ENCODE measurements at regions of chr20 and their contacts with region 1.

Region 1: GRCh38 chr20:36469973-36470372 is 71.3 kb upstream of the MYL9 start:
- DNase-seq: no peak
- ATAC-seq: no peak
- H3K4me3 ChIP-seq: no peak overlapping the region
- H3K27ac ChIP-seq: peak overlapping the region; percentile 43 to 53; a peak in 4 of 6 replicates
- H3K4me1 ChIP-seq: peaks cover 99% of the 10 kb centered on the region
- CTCF ChIP-seq: no peak
- EP300 ChIP-seq: no peak
- POLR2A ChIP-seq: no peak
- RAD21 ChIP-seq: no peak

Region 2: DNA sequence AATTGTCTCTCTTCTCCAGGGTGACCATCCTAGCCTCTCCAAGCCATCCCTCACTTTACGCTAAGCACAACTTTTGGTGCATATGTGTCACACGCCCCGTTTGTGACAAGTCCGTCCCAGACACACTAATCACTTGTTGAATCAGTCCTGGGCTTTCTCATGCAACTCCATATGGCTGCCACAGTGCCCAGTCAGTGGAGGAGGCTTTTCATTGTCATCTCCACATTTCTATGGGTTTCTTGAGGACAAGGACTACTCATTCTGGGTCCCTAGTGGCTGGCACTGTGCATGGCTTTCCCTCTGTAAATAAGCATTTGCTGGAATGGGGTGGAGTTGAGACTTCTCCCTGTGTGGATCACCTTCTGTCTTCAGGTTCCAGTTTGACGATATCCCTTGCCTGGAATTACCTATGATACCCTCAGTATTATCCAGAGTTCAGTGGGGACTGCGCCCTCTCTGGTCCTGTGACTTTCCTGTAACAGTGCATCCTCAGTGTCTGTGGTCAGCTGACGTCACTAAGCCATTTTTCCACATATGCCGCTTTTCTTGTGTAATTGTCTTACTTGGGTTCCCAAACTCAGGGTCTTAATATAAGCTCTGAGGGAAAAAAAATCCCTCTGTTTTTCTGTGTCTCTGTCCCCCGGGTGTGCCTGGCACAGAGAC is 11.5 kb after region 1 on chr20:
- CTCF ChIA-PET with region 1: interaction called, 12 read pairs
- POLR2A ChIA-PET with region 1: no interaction called
- DNase-seq: no peak
- ATAC-seq: peak; percentile 51 to 52; a peak in 4 of 6 replicates
- H3K4me3 ChIP-seq: no peak overlapping the region
- H3K27ac ChIP-seq: no peak overlapping the region
- H3K4me1 ChIP-seq: peaks cover 20% of the 10 kb centered on the region
- CTCF ChIP-seq: no peak
- EP300 ChIP-seq: no peak
- POLR2A ChIP-seq: no peak
- RAD21 ChIP-seq: no peak